ENCODE measurements at regions of chr1 and their contacts with region 1.

Region 1: GRCh38 chr1:50332941-50333594 is 90.2 kb downstream of the DMRTA2 start:
- DNase-seq: peak; percentile 44 to 91
- H3K4me3 ChIP-seq: peak overlapping the region; percentile 27 to 68 (median 54)
- H3K27ac ChIP-seq: no peak overlapping the region
- H3K4me1 ChIP-seq: no peaks in the 10 kb centered on the region; a peak in 1 of 7 replicates
- H3K27me3 ChIP-seq: peaks cover 0 to 24% (median 17%) of the 10 kb centered on the region in 4 experiments; a peak in 5 of 7 replicates
- CTCF ChIP-seq: peak; percentile 79 to 93 (median 85)
- EP300 ChIP-seq: no peak
- POLR2A ChIP-seq: no peak
- RAD21 ChIP-seq: peak; percentile 92 to 93

Region 2: GRCh38 chr1:50148142-50148923 is 184.7 kb before region 1 on chr1:
- CTCF ChIA-PET with region 1: no interaction called
- POLR2A ChIA-PET with region 1: no interaction called
- DNase-seq: no peak
- H3K4me3 ChIP-seq: no peak overlapping the region
- H3K27ac ChIP-seq: no peak overlapping the region
- H3K4me1 ChIP-seq: peaks cover 0 to 7% (median 0%) of the 10 kb centered on the region in 4 experiments; a peak in 2 of 7 replicates
- H3K27me3 ChIP-seq: no peaks in the 10 kb centered on the region
- CTCF ChIP-seq: no peak
- EP300 ChIP-seq: no peak
- POLR2A ChIP-seq: no peak
- RAD21 ChIP-seq: no peak

Region 3: DNA sequence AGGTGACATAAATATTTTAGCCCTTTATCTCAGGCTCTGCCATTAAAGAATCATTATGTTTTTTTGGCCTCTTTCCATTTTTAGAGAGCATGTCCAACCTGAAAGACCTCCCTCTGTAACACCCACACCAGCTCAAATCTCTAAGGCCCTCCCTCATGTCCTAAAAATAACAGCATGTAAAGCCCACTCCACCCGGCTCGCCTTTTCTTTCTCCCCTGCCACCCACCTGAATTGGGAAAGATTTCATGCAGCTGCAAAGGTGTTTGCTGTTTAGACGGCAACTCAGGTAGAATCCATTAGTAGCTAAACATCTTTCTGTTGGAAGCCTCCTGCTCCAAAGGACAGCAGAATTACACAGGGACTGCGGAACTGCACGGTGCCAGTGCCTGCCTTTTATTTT is 10.3 kb after region 1 on chr1:
- CTCF ChIA-PET with region 1: interaction called, 35 read pairs
- POLR2A ChIA-PET with region 1: no interaction called
- DNase-seq: no peak
- H3K4me3 ChIP-seq: no peak overlapping the region
- H3K27ac ChIP-seq: no peak overlapping the region
- H3K4me1 ChIP-seq: no peaks in the 10 kb centered on the region
- H3K27me3 ChIP-seq: no peaks in the 10 kb centered on the region; a peak in 3 of 7 replicates
- CTCF ChIP-seq: no peak
- EP300 ChIP-seq: no peak
- POLR2A ChIP-seq: no peak
- RAD21 ChIP-seq: no peak

Region 4: DNA sequence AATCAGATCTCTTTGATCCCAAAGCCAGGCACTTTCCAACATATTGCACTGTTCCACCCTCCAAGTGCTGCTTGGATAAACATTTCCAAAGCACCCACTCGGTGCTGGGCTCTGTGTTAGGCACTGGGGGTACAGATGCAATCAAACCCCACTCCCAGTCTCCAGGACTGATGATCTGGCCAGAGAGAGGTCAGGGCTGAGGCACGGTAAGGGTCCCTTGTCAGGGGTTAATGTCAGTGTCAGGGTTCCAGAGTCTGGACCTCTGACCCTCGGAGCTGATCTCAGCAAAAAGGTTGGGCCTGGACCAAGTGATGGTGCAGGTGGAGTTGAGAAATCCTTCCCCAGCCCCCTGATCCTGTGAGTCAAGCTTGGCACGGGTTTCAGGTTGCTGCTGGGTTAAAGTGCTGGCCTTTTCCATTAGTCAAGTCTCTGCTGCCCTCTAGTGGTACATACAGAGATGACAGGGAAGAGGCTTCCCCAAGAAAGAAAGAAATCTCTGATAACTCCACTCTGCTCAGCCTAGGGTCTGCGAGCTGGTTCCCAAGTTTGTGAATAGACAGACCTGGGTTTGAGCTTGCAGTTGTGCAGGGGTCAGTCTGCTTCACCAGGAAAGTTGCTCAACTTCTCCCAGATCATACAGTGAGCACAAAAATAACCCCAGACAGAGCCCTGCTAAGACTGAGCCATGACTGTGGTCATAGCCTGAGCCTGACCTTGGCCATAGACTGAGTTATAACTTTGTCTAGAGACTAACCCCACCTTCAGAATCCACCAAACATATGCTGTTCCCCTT is 15.6 kb after region 1 on chr1:
- CTCF ChIA-PET with region 1: interaction called, 35 read pairs
- POLR2A ChIA-PET with region 1: no interaction called
- DNase-seq: peak in 1 of 2 experiments; percentile 76
- H3K4me3 ChIP-seq: no peak overlapping the region
- H3K27ac ChIP-seq: no peak overlapping the region
- H3K4me1 ChIP-seq: peaks cover 0 to 4% (median 3%) of the 10 kb centered on the region in 4 experiments; a peak in 4 of 7 replicates
- H3K27me3 ChIP-seq: no peaks in the 10 kb centered on the region
- CTCF ChIP-seq: peak; percentile 12 to 83 (median 75)
- EP300 ChIP-seq: no peak
- POLR2A ChIP-seq: no peak
- RAD21 ChIP-seq: peak; percentile 93 to 97

Region 5: DNA sequence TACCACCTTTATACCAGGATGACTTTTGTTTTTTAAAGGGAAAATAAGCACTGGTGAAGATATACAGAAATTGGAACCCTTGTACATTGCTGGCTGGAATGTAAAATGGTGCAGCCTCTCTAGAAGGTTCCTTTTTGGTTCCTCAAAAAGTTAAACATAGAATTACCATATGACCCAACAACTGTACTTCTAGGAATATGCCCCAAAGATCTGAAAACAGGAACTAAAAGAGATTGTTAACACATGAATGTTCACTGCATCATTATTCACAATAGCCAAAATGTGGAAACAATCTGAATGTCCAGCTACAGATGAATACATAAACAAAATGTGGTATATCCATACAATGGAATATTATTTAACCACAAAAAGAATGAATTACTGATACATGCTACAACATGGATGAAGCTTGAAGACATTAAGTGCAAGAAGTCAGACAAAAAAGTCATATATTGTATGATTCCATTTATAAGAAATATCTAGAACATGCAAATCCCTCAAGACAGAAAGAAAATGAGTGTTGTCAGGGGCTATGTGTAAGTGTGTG is 175.0 kb after region 1 on chr1:
- CTCF ChIA-PET with region 1: no interaction called
- POLR2A ChIA-PET with region 1: no interaction called
- DNase-seq: no peak
- H3K4me3 ChIP-seq: no peak overlapping the region
- H3K27ac ChIP-seq: no peak overlapping the region
- H3K4me1 ChIP-seq: no peaks in the 10 kb centered on the region
- H3K27me3 ChIP-seq: no peaks in the 10 kb centered on the region
- CTCF ChIP-seq: no peak
- EP300 ChIP-seq: no peak
- POLR2A ChIP-seq: no peak
- RAD21 ChIP-seq: no peak